ENCODE measurements at regions of chr16 and their contacts with region 1.

Region 1: GRCh38 chr16:48054881-48055601 is 100.8 kb downstream of the ABCC12 start:
- DNase-seq: no peak
- H3K4me3 ChIP-seq: no peak overlapping the region
- H3K27me3 ChIP-seq: no peaks in the 10 kb centered on the region; the same call in 1 of the 2 replicates
- CTCF ChIP-seq: peak; percentile 97

Region 2: DNA sequence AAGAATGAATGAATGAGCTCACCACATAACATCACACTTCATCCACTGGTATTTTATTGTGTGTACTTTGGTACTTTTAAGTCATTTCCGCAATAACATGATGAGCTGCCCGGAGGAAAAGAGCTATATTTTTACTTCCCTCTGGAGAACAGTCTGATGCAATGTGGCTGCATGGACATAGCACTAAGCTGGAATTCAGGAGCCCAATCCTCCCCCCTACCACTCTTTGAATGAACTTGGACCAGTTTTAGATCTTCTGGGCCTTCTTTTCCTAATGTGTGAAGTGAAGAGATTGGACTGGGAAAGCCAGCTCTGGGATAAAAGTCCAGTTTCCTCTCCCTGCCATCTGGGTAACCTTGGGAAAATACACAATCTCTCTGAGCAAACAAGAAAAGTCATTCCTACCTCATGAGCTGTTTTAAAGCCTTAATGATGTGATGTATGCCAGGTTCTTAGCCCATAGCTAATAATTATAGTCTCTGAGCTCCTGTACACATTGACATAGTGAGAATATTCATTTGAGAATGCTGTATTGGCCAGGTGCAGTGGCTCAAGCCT is 21.5 kb after region 1 on chr16:
- CTCF ChIA-PET with region 1: interaction called, 11 read pairs
- POLR2A ChIA-PET with region 1: no interaction called
- DNase-seq: peak; percentile 27
- H3K4me3 ChIP-seq: no peak overlapping the region
- H3K27me3 ChIP-seq: no peaks in the 10 kb centered on the region; the same call in 1 of the 2 replicates
- CTCF ChIP-seq: no peak

Measured in BJ (cell line).